ENCODE measurements at regions of chr2 and their contacts with region 1.

Region 1: DNA sequence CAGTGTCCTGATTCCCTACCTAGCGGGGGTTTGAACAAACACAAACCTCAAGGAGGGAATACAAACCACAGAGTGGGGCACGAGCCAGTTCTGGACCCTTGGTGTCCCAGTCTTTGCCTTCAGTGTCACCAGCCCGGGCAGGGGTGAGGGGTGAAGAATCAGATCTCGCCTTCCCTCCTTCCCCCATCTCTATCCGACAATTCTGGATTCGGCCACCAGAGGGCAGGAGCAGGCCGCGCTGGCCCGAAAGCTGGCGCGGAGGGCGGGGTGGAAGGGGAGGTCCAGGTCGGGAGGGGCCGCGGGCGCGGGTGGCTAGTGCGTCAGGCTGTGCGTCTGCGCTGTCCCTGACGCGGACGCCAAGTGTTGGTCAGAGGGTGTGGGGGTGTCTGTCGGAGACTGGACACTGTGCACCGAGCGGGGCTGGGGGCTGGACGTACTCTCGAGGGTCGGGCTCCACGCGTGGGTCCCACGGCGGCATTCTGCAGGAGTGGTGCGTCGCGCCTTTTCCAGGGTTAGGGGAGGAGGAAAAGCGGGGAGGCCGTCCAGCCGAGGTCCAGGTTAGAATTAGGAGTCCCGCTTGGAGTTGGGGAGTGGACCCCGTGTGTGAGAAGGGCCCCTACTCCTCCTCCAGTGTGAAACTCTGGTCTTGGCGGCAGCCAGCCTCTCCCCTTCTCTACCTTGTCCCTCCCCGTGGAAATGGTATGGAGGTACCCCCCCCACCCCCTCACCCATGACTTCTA is 2.9 kb upstream of the CRYBA2 start:
- DNase-seq: peak; percentile 93
- H3K4me3 Mint-ChIP-seq: peak overlapping the region; percentile 34
- H3K27ac Mint-ChIP-seq: no peak overlapping the region
- H3K4me1 Mint-ChIP-seq: peaks cover 3% of the 10 kb centered on the region
- H3K27me3 Mint-ChIP-seq: peaks cover 81% of the 10 kb centered on the region

Region 2: GRCh38 chr2:218962859-218963492 is 33.2 kb before region 1 on chr2:
- intact Hi-C with region 1: loop called (anchors 5 kb)
- DNase-seq: peak; percentile 90
- H3K4me3 Mint-ChIP-seq: no peak overlapping the region
- H3K27ac Mint-ChIP-seq: no peak overlapping the region
- H3K4me1 Mint-ChIP-seq: peaks cover 8% of the 10 kb centered on the region
- H3K27me3 Mint-ChIP-seq: peaks cover 62% of the 10 kb centered on the region

Measured in activated CD4-positive, alpha-beta T cell treated with anti-CD3 and anti-CD28 coated beads, Interleukin-2, amount 10 ng/mL, durations not matched to agents 24 days and 14 days (primary cell).